A549 (cell line): ENCODE measurements at regions of chr2 and their contacts with region 1.

Region 1: DNA sequence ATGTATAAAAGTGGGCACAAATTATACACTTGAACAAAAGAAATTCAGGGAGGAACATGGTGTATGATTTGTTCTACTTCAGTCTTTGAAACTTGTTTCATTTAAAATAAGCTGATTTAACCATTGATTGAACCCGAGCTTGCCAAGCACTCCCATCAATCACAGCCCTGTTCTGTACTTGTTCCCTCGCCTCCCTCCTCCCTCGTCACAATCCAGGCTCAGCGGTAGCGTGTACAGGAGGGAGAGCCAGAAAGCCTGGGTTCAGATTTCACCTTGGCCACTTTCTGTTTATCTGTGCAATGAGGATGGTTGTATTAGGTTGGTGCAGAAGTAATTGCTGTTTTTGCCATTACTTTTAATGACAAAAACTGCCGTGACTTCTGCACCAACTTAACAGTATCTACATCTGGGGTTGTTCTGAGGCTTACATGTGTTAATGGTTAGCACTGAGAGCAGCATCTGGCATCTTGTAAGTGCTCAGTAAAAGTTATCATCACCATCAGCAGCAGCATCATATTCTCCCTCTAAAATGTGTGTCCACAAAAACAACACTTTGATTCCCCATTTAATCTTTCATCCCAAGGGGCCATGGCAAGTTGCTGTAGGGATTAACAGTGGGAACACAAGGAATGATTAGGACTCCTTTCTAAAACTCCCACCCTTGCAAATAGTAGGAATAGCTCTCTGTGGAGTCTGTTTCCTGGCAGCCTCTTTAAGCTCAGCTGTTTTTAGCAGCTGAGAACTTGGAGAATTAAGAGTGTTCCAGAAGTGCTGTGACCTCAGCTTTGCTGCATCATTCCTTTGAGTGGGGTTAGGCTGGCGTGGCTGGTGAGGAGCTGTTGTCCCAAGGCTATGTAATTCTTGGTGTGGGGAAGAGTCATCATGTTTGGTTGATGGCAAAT is 4.7 kb downstream of the DPYSL5 start:
- DNase-seq: no peak
- ATAC-seq: no peak
- H3K4me3 ChIP-seq: no peak overlapping the region
- H3K27ac ChIP-seq: no peak overlapping the region
- H3K4me1 ChIP-seq: 0 out of 3 replicates have a peak, but pooled peaks cover 3% of the 10 kb centered on the region
- CTCF ChIP-seq: no peak
- EP300 ChIP-seq: no peak
- POLR2A ChIP-seq: no peak
- RAD21 ChIP-seq: no peak

Region 2: GRCh38 chr2:26704441-26704977 is 148.1 kb before region 1 on chr2:
- CTCF ChIA-PET with region 1: no interaction called
- POLR2A ChIA-PET with region 1: no interaction called
- DNase-seq: no peak
- ATAC-seq: no peak
- H3K4me3 ChIP-seq: no peak overlapping the region
- H3K27ac ChIP-seq: 0 out of 6 replicates have a peak overlapping the region, but pooled peaks of 1 of the 2 experiments have one; percentile 31
- H3K4me1 ChIP-seq: no peaks in the 10 kb centered on the region
- CTCF ChIP-seq: no peak
- EP300 ChIP-seq: no peak
- POLR2A ChIP-seq: no peak
- RAD21 ChIP-seq: no peak

Region 3: GRCh38 chr2:26840937-26841613 is 11.6 kb before region 1 on chr2:
- CTCF ChIA-PET with region 1: interaction called, 128 read pairs
- POLR2A ChIA-PET with region 1: no interaction called
- DNase-seq: peak; percentile 48 to 58
- ATAC-seq: peak; percentile 83 to 91
- H3K4me3 ChIP-seq: no peak overlapping the region
- H3K27ac ChIP-seq: no peak overlapping the region
- H3K4me1 ChIP-seq: peaks cover 2% of the 10 kb centered on the region; the same call in 2 of the 3 replicates
- CTCF ChIP-seq: no peak
- EP300 ChIP-seq: no peak
- POLR2A ChIP-seq: no peak
- RAD21 ChIP-seq: 0 out of 5 replicates have a peak, but pooled peaks of 1 of the 2 experiments have one; percentile 24

Region 4: GRCh38 chr2:27123302-27124231 is 270.9 kb after region 1 on chr2 and contains the start of gene ABHD1:
- CTCF ChIA-PET with region 1: no interaction called
- POLR2A ChIA-PET with region 1: no interaction called
- DNase-seq: peak; percentile 36 to 69
- ATAC-seq: peak; percentile 79 to 91
- H3K4me3 ChIP-seq: peak within 1 kb of the TSS; percentile 56
- H3K27ac ChIP-seq: peak within 1 kb of the TSS; percentile 73 to 87
- H3K4me1 ChIP-seq: peaks cover 3% of the 10 kb centered on the region; the same call in 1 of the 3 replicates
- CTCF ChIP-seq: no peak
- EP300 ChIP-seq: no peak
- POLR2A ChIP-seq: peak; percentile 89
- RAD21 ChIP-seq: no peak
- polyA plus RNA-seq, gene ABHD1: 1.9 and 2.4 TPM in 2 replicates